ENCODE measurements at regions of chr18 and their contacts with region 1.

Region 1: DNA sequence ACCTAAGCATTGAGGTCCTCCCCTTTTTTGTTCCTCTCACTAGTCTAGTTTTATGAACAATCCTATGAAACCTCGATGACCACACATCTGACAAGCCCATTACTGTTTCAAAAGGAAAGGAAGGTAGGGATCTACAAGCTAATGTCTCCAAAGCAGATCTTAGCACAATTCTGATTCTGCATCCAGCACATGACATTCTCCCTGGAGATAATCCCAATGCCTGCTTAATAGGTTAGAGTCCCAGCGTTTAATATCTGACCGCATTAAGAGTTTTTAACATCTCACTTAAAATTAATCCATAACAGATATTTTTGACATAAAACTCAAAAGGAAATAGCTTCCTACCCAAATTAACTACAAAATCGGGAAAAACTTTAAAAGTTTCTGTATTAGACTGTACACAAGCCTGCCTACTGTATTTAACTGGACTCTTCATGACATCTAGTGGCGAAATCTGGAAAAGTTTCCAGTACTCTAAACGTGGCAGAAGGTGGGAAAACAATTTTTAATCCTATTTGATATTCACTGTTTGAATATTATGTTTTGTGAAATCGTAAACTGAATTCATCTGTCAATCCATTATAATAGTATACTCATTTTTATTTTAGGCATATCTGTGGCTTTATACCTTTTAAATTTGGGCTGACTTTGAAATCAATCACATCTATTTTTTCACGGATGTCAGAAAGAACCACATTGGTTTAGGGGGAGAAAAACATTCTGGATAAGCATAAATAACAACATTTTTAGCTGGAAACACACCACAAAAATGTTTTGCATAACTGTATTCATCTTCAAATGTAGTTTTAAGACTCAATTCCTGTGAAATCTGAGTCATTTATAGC is 62.4 kb downstream of the TXNL1 start:
- DNase-seq: no peak
- H3K4me3 ChIP-seq: no peak overlapping the region
- CTCF ChIP-seq: peak; percentile 40

Region 2: GRCh38 chr18:56327191-56327885 is 248.7 kb before region 1 on chr18:
- CTCF ChIA-PET with region 1: interaction called, 11 read pairs
- POLR2A ChIA-PET with region 1: no interaction called
- DNase-seq: no peak
- H3K4me3 ChIP-seq: no peak overlapping the region
- CTCF ChIP-seq: no peak

Region 3: DNA sequence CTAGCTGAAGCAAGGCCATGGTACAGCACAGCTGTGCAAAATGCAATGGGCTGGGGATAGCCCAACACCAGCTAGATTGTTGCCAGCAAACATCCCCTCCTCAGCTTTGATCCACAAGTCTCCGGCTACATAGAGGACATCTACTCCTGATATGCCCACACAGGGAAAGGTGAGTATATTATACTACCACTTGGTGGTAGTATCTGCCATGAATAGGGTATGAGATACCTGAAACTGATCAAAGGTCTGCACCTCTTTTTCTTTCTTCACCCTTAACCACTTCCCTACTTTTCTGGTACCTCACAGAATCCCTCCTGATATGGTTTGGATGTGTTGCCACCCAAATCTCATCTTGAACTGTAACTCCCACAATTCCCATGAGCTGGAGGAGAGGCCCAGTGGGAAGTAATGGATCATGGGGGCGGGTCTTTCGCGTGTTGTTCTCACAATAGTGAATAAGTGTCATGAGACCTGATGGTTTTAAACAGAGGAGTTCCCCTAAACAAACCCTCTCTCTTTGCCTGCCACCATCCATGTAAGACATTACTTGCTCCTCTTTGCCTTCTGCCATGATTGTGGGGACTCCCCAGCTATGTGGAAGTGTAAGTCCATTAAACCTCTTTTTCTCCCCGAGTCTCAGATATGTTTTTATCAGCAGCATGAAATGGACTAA is 217.3 kb before region 1 on chr18:
- CTCF ChIA-PET with region 1: interaction called, 18 read pairs
- POLR2A ChIA-PET with region 1: no interaction called
- DNase-seq: no peak
- H3K4me3 ChIP-seq: no peak overlapping the region
- CTCF ChIP-seq: no peak

Region 4: GRCh38 chr18:56433919-56434318 is 142.1 kb before region 1 on chr18:
- CTCF ChIA-PET with region 1: no interaction called
- POLR2A ChIA-PET with region 1: no interaction called
- DNase-seq: no peak
- H3K4me3 ChIP-seq: no peak overlapping the region
- CTCF ChIP-seq: no peak

Region 5: GRCh38 chr18:56565551-56566345 is 10.3 kb before region 1 on chr18:
- CTCF ChIA-PET with region 1: interaction called, 49 read pairs
- POLR2A ChIA-PET with region 1: no interaction called
- DNase-seq: peak; percentile 79
- H3K4me3 ChIP-seq: no peak overlapping the region
- CTCF ChIP-seq: no peak